HepG2 (cell line): ENCODE measurements at regions of chr10 and their contacts with region 1.

Region 1: DNA sequence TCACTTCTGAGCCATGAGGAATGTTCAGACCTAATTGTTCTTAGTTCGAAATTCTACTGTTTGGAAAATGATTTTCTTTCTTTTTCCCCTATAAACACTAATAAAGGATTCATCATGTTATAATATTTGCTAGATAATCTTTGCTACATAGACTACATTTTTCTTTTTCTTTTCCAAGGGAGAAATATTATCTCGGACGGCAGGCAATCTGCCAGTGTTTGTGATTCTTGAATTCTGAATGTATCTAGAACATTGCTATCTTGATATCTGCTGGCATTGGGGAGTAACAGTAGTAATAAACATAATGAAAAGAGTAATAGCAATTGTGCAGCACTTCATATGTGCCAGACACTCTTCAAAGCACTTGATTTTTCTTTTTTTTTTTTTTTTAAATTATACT is 107.7 kb upstream of the ZNF32 start:
- DNase-seq: no peak
- ATAC-seq: no peak
- H3K4me3 ChIP-seq: no peak overlapping the region
- H3K27ac ChIP-seq: no peak overlapping the region
- H3K4me1 ChIP-seq: no peaks in the 10 kb centered on the region
- H3K27me3 ChIP-seq: peaks cover 0 to 1% of the 10 kb centered on the region in 2 experiments; a peak in 1 of 5 replicates
- CTCF ChIP-seq: no peak
- EP300 ChIP-seq: no peak
- POLR2A ChIP-seq: no peak
- RAD21 ChIP-seq: no peak

Region 2: DNA sequence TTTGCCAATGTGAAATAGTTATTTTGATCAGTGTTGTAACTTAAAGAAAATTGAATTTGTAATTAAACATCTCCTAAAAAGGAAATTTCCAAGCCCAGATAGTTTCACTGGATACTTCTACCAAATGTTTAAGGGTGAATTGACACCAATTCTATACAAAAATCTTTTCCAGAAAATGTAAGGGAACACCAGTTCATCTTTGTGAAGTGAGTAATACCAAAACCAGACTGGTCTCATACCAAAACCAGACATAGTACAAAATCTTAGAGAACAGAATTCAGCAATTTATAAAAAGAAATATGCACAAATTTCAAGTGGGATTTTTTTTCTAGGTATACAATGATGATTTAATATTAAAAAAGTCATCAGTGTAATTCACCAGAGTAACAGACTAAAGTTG is 21.6 kb before region 1 on chr10:
- CTCF ChIA-PET with region 1: no interaction called
- POLR2A ChIA-PET with region 1: no interaction called
- in situ Hi-C with region 1: no loop called
- intact Hi-C with region 1: loop called (anchors 1 kb)
- DNase-seq: no peak
- ATAC-seq: no peak
- H3K4me3 ChIP-seq: no peak overlapping the region
- H3K27ac ChIP-seq: no peak overlapping the region
- H3K4me1 ChIP-seq: no peaks in the 10 kb centered on the region
- H3K27me3 ChIP-seq: no peaks in the 10 kb centered on the region; a peak in 2 of 5 replicates
- CTCF ChIP-seq: no peak
- EP300 ChIP-seq: no peak
- POLR2A ChIP-seq: no peak
- RAD21 ChIP-seq: no peak

Region 3: DNA sequence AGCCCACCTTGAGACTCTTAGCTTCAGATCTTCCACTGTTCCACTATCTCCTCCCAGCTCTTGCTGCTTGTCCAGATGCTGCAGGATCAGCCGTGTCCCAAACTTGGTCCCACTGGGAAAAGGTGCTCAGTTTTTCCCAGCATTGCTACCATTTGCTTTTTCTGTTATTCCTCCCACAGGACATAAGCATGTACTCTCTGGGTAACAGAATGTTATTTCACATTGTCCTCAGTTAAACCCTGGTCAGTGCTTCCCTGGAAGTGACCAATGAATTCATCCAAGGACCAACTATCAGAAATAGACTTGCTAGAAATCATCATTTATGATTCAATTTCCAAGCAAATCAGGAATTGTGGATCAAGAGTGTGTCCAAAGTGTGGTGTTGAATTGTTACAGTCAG is 71.5 kb after region 1 on chr10:
- CTCF ChIA-PET with region 1: no interaction called
- POLR2A ChIA-PET with region 1: no interaction called
- in situ Hi-C with region 1: no loop called
- intact Hi-C with region 1: no loop called
- DNase-seq: no peak
- ATAC-seq: no peak
- H3K4me3 ChIP-seq: no peak overlapping the region
- H3K27ac ChIP-seq: no peak overlapping the region
- H3K4me1 ChIP-seq: no peaks in the 10 kb centered on the region; the same call in 1 of the 2 replicates
- H3K27me3 ChIP-seq: no peaks in the 10 kb centered on the region; a peak in 1 of 5 replicates
- CTCF ChIP-seq: no peak
- EP300 ChIP-seq: no peak
- POLR2A ChIP-seq: no peak
- RAD21 ChIP-seq: no peak